CD14-positive monocyte (primary cell): ENCODE measurements at regions of chr12 and their contacts with region 1.

Region 1: DNA sequence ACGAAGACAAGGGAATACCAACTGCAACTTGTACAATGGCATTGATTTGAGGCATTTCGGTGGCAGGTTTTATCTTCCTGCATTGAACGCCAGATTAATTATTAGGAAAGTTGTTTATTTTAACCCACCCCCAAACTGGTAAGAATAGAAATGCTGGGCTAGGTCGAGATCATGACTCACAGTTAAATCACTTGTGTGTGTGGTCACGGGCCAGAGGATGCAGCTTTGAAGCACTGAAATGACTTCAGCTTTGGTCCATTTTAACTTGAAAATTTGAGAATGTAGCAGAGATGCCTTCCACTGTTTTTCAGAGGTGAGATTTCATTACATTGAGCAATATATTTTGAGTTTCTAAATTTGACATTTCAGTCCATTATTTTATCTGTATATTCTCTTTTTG is 23.6 kb upstream of the KCNH3 start:
- DNase-seq: no peak
- H3K4me3 ChIP-seq: no peak overlapping the region
- H3K4me3 Mint-ChIP-seq: no peak overlapping the region
- H3K27ac ChIP-seq: no peak overlapping the region
- H3K27ac Mint-ChIP-seq: no peak overlapping the region
- H3K4me1 ChIP-seq: no peaks in the 10 kb centered on the region
- H3K4me1 Mint-ChIP-seq: no peaks in the 10 kb centered on the region
- H3K27me3 ChIP-seq: no peaks in the 10 kb centered on the region
- H3K27me3 Mint-ChIP-seq: no peaks in the 10 kb centered on the region
- CTCF ChIP-seq: no peak

Region 2: GRCh38 chr12:49296034-49296835 is 219.0 kb before region 1 on chr12:
- intact Hi-C with region 1: loop called (anchors 10 kb)
- DNase-seq: peak; percentile 27 to 47 (median 38)
- H3K4me3 ChIP-seq: peak overlapping the region in 2 of 3 experiments; percentile 3 to 60
- H3K4me3 Mint-ChIP-seq: peak overlapping the region; percentile 60 to 83
- H3K27ac ChIP-seq: no peak overlapping the region
- H3K27ac Mint-ChIP-seq: no peak overlapping the region
- H3K4me1 ChIP-seq: peaks cover 13 to 30% of the 10 kb centered on the region in 2 donors
- H3K4me1 Mint-ChIP-seq: peaks cover 25% of the 10 kb centered on the region
- H3K27me3 ChIP-seq: peaks cover 37 to 73% of the 10 kb centered on the region in 2 donors
- H3K27me3 Mint-ChIP-seq: peaks cover 70 to 92% (median 74%) of the 10 kb centered on the region in 3 donors
- CTCF ChIP-seq: peak; percentile 90

Region 3: DNA sequence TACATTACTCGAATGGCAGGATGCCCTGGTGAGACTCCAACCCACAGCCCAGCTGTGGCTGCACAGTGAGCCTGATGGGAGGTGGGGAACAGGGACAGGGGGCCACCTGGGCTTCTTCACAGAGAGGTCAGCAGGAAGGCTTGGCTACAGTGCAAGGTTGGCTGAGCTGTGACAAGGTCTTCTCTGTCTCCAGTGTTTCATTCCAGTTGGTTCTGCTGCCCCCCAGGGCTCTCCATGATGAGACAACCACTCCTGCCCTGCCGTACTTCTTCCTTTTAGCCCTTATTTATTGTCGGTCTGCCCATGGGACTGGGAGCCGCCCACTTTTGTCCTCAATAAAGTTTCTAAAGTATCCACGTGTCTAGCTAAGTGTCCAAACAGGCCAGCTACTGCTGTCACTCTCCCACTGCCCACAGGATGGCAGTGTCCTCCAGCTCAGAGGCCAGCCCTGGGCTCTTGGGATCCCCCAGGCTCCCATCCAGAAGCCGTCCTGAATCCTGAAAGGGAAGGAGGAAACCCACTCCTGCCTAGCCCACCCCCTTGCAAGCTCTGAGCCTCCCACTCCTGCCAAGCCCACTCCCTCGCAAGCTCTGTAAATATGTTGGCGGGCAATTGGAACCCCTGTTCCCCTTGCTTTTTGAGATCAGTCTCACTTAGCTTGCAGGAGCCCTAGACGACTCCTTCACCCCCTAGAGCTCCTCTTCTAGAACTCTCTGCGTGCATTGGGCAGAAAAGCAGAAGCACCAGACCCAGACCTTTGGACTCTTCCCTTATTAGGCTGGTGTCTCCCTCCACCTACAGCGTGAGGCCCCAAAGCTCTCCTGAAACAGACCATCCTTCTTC is 183.7 kb before region 1 on chr12:
- intact Hi-C with region 1: no loop called
- DNase-seq: no peak
- H3K4me3 ChIP-seq: no peak overlapping the region
- H3K4me3 Mint-ChIP-seq: peak overlapping the region in 1 of 2 donors; percentile 81
- H3K27ac ChIP-seq: no peak overlapping the region
- H3K27ac Mint-ChIP-seq: no peak overlapping the region
- H3K4me1 ChIP-seq: peaks cover 4 to 11% of the 10 kb centered on the region in 2 donors
- H3K4me1 Mint-ChIP-seq: peaks cover 21% of the 10 kb centered on the region
- H3K27me3 ChIP-seq: peaks cover 41 to 47% of the 10 kb centered on the region in 2 donors
- H3K27me3 Mint-ChIP-seq: peaks cover 47 to 60% (median 51%) of the 10 kb centered on the region in 3 donors
- CTCF ChIP-seq: peak; percentile 54

Region 4: DNA sequence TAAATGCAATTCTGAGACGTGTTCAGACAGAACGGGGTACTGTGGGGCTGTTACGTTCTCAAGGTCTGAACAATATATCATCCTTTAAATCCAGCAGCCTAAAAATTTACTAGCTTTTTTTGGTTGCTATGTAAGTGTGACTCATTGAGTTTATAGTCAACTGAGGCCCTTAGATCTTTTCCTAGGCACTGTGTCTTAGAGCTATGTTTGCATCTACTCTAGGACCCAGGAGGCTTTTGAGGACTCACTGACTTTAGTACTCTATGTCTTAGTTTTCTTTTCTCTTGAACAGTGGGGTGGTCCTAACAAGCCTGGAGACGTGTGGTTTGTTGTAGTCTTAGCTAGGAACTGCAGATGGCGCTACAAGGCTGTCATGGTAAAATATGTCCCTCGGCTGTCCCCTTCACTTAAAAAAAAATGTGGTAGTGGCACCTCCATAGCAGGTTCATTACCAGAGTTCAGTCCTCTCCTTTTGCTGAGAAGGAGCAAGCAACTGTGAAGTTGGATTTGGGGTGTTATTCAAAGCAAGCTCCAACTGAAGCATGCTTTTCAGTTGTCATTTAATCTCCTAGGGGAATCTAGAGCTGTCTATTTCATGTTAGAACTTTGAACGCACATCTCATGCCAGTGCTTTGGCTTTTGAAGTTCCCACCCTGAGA is 156.7 kb before region 1 on chr12:
- intact Hi-C with region 1: loop called (anchors 1 to 2 kb)
- DNase-seq: peak; percentile 52 to 65 (median 64)
- H3K4me3 ChIP-seq: no peak overlapping the region
- H3K4me3 Mint-ChIP-seq: no peak overlapping the region
- H3K27ac ChIP-seq: no peak overlapping the region
- H3K27ac Mint-ChIP-seq: no peak overlapping the region
- H3K4me1 ChIP-seq: no peaks in the 10 kb centered on the region
- H3K4me1 Mint-ChIP-seq: peaks cover 2% of the 10 kb centered on the region
- H3K27me3 ChIP-seq: peaks cover 2 to 7% of the 10 kb centered on the region in 2 donors
- H3K27me3 Mint-ChIP-seq: peaks cover 6 to 28% (median 21%) of the 10 kb centered on the region in 3 donors
- CTCF ChIP-seq: peak; percentile 89